Heart right ventricle (tissue), 16 donors: ENCODE measurements at regions of chr4 and their contacts with region 1.

Region 1: DNA sequence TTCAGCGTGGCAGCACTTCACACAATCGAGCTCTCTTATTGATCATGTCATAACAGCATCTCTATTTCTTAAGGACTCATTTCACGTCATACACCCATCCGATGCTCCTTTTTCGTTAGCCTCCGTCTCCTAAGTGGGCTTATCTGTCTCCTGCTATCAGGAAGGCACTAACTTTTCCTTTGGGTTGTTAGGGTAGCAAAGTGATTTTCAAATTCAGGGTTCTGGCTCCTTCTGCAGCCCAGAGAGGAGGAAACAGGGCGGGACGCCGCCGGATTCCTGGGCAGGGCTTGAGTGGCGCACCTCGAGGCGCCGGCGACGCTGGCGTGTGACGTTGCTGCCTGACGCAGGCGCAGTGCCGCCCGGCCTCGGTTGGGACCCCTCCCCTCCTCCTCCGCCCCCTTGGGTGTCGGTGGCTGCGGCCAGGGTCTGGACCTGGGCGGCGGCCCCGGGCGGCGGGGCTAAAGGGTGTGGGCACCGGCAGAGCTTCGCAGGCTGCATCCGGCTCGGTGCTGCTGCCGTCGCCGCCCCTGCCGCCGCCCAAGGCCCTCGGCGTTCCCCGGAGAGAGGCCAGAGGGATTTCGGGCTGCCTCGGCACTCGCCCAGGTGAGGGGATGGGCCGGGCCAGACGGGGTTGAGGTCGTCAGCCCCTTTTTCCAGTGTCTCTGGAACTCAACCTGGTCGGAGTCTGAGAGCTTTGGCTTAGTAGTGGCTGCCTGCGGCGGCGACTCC is at the start of gene BLTP1:
- DNase-seq: peak; percentile 89 to 93
- ATAC-seq: peak; percentile 99 to 100 (median 100)
- H3K4me3 ChIP-seq: peak within 1 kb of the TSS; percentile 69 to 100 (median 96)
- H3K27ac ChIP-seq: peak within 1 kb of the TSS; percentile 76 to 98 (median 94)
- H3K4me1 ChIP-seq: peaks cover 0 to 34% (median 20%) of the 10 kb centered on the region in 9 donors
- H3K27me3 ChIP-seq: no peaks in the 10 kb centered on the region
- CTCF ChIP-seq: peak in 3 of 9 donors; percentile 13 to 35 (median 29)
- total RNA-seq, gene BLTP1: 33.2 to 49.8 (median 41.2) TPM

Region 2: GRCh38 chr4:121800961-121801714 is 351.0 kb before region 1 on chr4 and contains the start of gene EXOSC9:
- intact Hi-C with region 1: loop called in 1 of 10 experiments (anchors 10 kb)
- DNase-seq: peak; percentile 95 to 96
- ATAC-seq: peak; percentile 96 to 99 (median 98)
- H3K4me3 ChIP-seq: peak within 1 kb of the TSS; percentile 76 to 94 (median 83)
- H3K27ac ChIP-seq: peak within 1 kb of the TSS; percentile 70 to 94 (median 87)
- H3K4me1 ChIP-seq: peaks cover 0 to 27% (median 10%) of the 10 kb centered on the region in 9 donors
- H3K27me3 ChIP-seq: no peaks in the 10 kb centered on the region
- CTCF ChIP-seq: no peak
- total RNA-seq, gene EXOSC9: 10.7 to 15.4 (median 13.1) TPM

Region 3: GRCh38 chr4:121943941-121944340 is 208.2 kb before region 1 on chr4:
- intact Hi-C with region 1: loop called in 2 of 10 experiments (anchors 5 to 10 kb)
- DNase-seq: no peak
- ATAC-seq: no peak
- H3K4me3 ChIP-seq: no peak overlapping the region
- H3K27ac ChIP-seq: no peak overlapping the region
- H3K4me1 ChIP-seq: no peaks in the 10 kb centered on the region
- H3K27me3 ChIP-seq: peaks cover 0 to 59% (median 48%) of the 10 kb centered on the region in 7 donors
- CTCF ChIP-seq: peak in 1 of 9 donors; percentile 8

Region 4: DNA sequence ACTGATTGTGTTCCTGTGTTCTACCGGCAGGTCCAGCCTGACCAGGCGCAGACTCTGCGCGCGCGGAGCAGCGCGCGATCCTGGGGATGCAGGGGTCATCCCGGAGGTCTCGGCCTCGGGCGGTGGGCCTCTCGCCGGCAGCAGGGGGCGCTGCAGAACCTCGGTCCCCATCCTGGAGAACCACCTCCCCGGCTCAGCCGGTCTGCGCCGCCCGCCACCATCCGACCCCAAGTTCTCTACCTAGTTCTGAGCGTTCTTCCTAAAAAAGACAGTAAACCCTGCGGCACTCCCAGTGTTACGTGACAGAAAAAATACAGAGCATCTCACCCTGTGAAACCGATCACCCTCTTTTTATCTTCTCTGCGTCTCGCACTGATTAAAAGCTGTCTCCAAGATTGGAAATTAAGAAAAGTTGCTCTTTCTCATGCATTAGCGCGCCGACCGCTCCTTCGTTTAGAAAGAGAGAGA is 201.9 kb before region 1 on chr4:
- intact Hi-C with region 1: loop called in 4 of 10 experiments (anchors 5 to 10 kb)
- DNase-seq: peak; percentile 75 to 85
- ATAC-seq: peak; percentile 88 to 97 (median 93)
- H3K4me3 ChIP-seq: peak overlapping the region; percentile 54 to 65 (median 62)
- H3K27ac ChIP-seq: peak overlapping the region in 1 of 10 donors; percentile 45
- H3K4me1 ChIP-seq: peaks cover 0 to 23% (median 17%) of the 10 kb centered on the region in 9 donors
- H3K27me3 ChIP-seq: peaks cover 4 to 81% (median 61%) of the 10 kb centered on the region in 7 donors
- CTCF ChIP-seq: peak; percentile 51 to 88 (median 77)

Region 5: GRCh38 chr4:121998002-121998401 is 154.1 kb before region 1 on chr4:
- intact Hi-C with region 1: loop called in 3 of 10 experiments (anchors 10 kb)
- DNase-seq: peak in 1 of 2 donors; percentile 4
- ATAC-seq: peak in 3 of 8 donors; percentile 21 to 74 (median 69)
- H3K4me3 ChIP-seq: no peak overlapping the region
- H3K27ac ChIP-seq: no peak overlapping the region
- H3K4me1 ChIP-seq: no peaks in the 10 kb centered on the region
- H3K27me3 ChIP-seq: peaks cover 0 to 15% (median 10%) of the 10 kb centered on the region in 7 donors
- CTCF ChIP-seq: peak in 7 of 9 donors; percentile 32 to 57 (median 47)

Region 6: GRCh38 chr4:122010610-122011009 is 141.5 kb before region 1 on chr4:
- intact Hi-C with region 1: loop called in 1 of 10 experiments (anchors 10 kb)
- DNase-seq: no peak
- ATAC-seq: no peak
- H3K4me3 ChIP-seq: no peak overlapping the region
- H3K27ac ChIP-seq: no peak overlapping the region
- H3K4me1 ChIP-seq: peaks cover 0 to 6% (median 0%) of the 10 kb centered on the region in 9 donors
- H3K27me3 ChIP-seq: no peaks in the 10 kb centered on the region
- CTCF ChIP-seq: no peak

Region 7: GRCh38 chr4:122052677-122053076 is 99.5 kb before region 1 on chr4:
- intact Hi-C with region 1: loop called in 1 of 10 experiments (anchors 10 kb)
- DNase-seq: peak in 1 of 2 donors; percentile 24
- ATAC-seq: peak; percentile 72 to 99 (median 96)
- H3K4me3 ChIP-seq: no peak overlapping the region
- H3K27ac ChIP-seq: peak overlapping the region in 1 of 10 donors; percentile 31
- H3K4me1 ChIP-seq: peaks cover 0 to 12% (median 0%) of the 10 kb centered on the region in 9 donors
- H3K27me3 ChIP-seq: no peaks in the 10 kb centered on the region
- CTCF ChIP-seq: no peak

Region 8: DNA sequence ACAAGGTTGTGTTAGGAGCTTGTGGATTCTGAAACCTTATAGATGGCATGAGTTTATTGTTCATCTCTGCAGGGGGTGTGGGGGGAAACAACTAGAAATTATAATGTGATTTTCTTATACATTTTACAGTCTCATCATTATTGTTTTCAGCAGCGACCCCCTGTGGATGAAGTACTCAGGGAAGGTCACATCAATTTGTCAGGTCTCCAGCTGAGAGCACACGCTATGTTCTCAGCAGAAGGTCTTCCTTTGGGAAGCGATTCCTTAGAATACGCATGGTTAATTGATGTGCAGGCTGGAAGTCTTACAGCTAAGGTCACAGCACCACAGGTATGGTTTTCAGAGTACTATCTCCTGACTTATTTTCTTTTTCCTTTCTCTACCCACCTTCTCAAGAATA is 72.2 kb after region 1 on chr4:
- intact Hi-C with region 1: no loop called
- DNase-seq: peak in 1 of 2 donors; percentile 5
- ATAC-seq: no peak
- H3K4me3 ChIP-seq: no peak overlapping the region
- H3K27ac ChIP-seq: no peak overlapping the region
- H3K4me1 ChIP-seq: peaks cover 0 to 4% (median 0%) of the 10 kb centered on the region in 9 donors
- H3K27me3 ChIP-seq: no peaks in the 10 kb centered on the region
- CTCF ChIP-seq: peak in 4 of 9 donors; percentile 29 to 45 (median 34)